Activated CD4-positive, alpha-beta T cell treated with anti-CD3 and anti-CD28 coated beads for 36 hours (primary cell): ENCODE measurements at regions of chr1 and their contacts with region 1.

Region 1: DNA sequence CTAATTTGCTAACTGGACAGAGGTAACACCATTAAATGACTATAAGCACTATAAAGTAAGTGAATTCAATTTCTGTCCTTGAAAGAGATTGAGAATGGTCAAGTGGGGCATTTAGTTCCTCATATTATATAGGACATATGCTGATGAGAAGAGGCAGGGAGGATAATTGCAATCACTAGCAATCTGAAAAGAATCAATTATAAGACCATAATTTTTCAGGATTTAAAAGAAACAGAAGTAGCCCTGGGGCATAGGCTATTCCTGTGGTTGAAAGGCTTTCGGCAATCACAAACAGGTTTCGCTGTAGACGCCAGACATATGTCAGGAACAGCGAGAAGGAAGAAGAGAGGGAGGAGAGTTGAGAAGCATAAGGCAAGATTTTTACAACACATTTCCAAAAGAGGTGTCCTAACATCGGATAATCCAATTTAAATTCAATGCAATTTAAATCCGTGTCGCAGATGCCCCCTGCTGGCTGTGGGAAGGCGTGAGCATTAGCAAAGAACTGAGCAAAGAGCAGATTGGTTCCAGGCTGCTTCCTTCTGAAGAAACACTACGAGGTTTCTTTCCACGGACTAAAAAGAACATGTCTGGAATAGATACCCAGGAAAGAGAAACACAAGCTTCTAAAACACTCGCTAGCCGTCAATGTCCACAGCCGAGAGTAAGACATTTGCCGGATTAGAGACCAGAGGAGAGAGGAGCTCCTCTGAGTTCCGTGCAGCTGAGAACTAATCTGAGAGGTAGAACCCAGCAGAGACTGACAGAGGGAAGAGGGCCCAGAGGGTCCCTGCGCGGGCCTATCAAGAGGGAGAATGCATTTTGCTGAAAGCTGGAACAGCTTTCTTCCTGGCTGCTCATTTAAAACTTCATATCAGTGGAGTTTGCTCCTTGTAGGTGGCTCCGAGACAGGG is 27.9 kb downstream of the RGS5 start:
- DNase-seq: peak; percentile 74
- ATAC-seq: no peak
- H3K4me3 Mint-ChIP-seq: no peak overlapping the region
- H3K27ac Mint-ChIP-seq: no peak overlapping the region
- H3K4me1 Mint-ChIP-seq: no peaks in the 10 kb centered on the region
- H3K27me3 Mint-ChIP-seq: no peaks in the 10 kb centered on the region

Region 2: DNA sequence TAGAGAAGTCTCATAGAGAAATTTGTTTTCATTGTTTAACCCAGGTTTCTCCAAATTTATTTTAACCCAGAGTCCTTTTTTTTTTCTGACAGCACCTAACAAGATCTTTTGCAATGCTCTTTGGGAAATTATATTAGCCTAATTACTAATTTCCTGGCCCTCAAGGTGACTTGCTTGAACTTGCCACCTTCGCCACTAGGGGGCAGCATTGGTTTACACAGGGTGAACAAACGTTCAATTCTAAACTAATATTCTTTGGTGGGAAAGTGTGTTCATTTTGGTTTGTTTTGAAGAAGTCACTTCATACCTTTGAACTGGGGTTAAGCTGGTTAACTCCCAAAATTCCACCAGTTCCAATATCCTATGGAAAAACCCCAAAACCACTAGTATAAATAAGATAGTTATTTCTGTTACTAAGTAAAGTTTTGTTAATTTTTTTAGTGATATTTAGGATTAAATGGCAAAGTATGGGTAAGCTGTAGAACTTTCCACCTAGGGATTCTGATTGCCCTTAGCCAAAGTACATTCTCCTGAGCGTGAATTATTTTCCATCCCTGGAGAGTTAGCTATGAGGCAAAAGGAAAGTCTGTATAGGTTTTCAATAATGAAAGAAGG is 326.8 kb before region 1 on chr1:
- CTCF ChIA-PET with region 1: interaction called, 18 read pairs
- POLR2A ChIA-PET with region 1: no interaction called
- intact Hi-C with region 1: loop called in 1 of 2 experiments (anchors 2 kb)
- DNase-seq: peak; percentile 89
- ATAC-seq: no peak
- H3K4me3 Mint-ChIP-seq: no peak overlapping the region
- H3K27ac Mint-ChIP-seq: no peak overlapping the region
- H3K4me1 Mint-ChIP-seq: no peaks in the 10 kb centered on the region
- H3K27me3 Mint-ChIP-seq: peaks cover 4% of the 10 kb centered on the region

Region 3: GRCh38 chr1:162854245-162854882 is 320.4 kb before region 1 on chr1:
- CTCF ChIA-PET with region 1: interaction called, 18 read pairs
- POLR2A ChIA-PET with region 1: no interaction called
- intact Hi-C with region 1: loop called (anchors 1 kb)
- DNase-seq: peak; percentile 71
- ATAC-seq: peak; percentile 58
- H3K4me3 Mint-ChIP-seq: no peak overlapping the region
- H3K27ac Mint-ChIP-seq: no peak overlapping the region
- H3K4me1 Mint-ChIP-seq: no peaks in the 10 kb centered on the region
- H3K27me3 Mint-ChIP-seq: peaks cover 1% of the 10 kb centered on the region

Region 4: DNA sequence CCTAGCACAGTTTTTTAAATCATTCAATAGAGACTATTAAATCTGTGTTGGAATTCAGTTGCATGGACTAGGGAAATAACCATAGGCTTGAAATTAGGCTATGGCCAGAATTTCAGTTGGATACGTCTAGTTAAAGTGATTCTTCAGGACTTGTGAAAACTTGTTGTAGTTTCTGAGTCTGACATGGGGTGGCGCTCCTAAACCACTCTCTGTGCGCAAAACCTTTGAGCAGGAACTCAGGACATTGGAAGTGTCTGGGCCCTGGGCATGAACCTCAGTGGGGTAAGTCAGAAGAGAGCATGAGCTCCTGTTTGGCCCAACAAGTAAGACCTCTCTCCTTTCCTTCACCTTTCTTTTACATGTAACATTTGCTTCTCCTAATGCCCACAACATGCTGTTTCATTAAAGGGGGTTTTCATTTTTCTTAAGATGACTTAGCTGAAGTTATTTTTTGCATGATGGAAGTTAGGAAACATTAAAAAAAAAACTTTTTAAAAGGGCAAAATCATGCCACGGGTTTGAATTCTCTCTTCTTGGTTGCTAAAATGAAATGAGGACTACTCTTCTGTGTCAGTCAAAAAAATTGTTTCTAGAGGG is 296.7 kb before region 1 on chr1:
- CTCF ChIA-PET with region 1: interaction called, 3 read pairs
- POLR2A ChIA-PET with region 1: no interaction called
- intact Hi-C with region 1: loop called (anchors 1 to 5 kb)
- DNase-seq: peak; percentile 64
- ATAC-seq: no peak
- H3K4me3 Mint-ChIP-seq: no peak overlapping the region
- H3K27ac Mint-ChIP-seq: no peak overlapping the region
- H3K4me1 Mint-ChIP-seq: no peaks in the 10 kb centered on the region
- H3K27me3 Mint-ChIP-seq: peaks cover 39% of the 10 kb centered on the region

Region 5: DNA sequence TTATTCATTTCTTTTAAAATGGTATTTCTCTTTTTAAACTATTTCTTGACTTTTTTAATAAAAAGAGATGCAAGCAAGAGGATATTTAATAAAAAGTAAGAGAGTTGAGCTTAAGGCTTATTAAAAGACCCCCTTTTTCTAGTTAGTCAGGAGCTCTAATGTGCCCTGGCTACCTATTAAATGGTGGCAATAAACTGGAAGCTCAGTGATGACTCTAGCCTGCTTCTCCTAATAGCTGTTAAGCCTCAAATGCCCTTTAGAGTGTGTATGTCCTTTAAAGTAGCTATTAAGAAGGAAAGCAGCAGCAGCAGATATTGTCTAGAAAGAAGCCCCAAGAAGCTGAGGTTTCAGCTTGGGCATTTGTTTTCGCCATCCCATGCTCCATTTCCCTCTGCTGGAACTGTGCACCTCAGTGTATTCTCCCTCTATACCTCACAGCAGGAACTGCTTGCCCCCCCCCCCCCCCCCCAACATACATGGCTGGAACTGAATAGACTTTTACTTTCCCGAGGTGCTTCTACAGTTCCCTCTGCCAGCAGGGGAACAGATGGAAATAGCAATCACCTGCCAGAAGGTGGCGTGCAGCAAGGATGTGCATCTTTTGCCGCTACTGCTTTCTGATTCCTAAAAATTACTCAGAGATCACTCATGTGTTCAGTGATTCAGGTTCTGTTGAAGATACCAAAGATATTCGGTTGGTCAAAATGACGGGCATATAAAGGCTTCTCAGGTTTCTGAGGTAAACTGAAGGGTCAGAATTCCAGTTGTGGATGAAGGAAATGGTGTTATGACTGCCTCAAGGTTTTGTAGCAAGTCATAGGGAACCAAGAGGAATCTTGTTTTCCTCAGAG is 103.2 kb before region 1 on chr1:
- CTCF ChIA-PET with region 1: interaction called, 5 read pairs
- POLR2A ChIA-PET with region 1: no interaction called
- intact Hi-C with region 1: loop called (anchors 2 kb)
- DNase-seq: peak; percentile 67
- ATAC-seq: peak; percentile 26
- H3K4me3 Mint-ChIP-seq: no peak overlapping the region
- H3K27ac Mint-ChIP-seq: no peak overlapping the region
- H3K4me1 Mint-ChIP-seq: peaks cover 2% of the 10 kb centered on the region
- H3K27me3 Mint-ChIP-seq: peaks cover 42% of the 10 kb centered on the region

Region 6: GRCh38 chr1:163315773-163316374 is 141.1 kb after region 1 on chr1:
- CTCF ChIA-PET with region 1: interaction called, 7 read pairs
- POLR2A ChIA-PET with region 1: no interaction called
- intact Hi-C with region 1: loop called (anchors 5 to 10 kb)
- DNase-seq: peak; percentile 69
- ATAC-seq: no peak
- H3K4me3 Mint-ChIP-seq: no peak overlapping the region
- H3K27ac Mint-ChIP-seq: no peak overlapping the region
- H3K4me1 Mint-ChIP-seq: peaks cover 4% of the 10 kb centered on the region
- H3K27me3 Mint-ChIP-seq: no peaks in the 10 kb centered on the region